ENCODE measurements at regions of chr1 and their contacts with region 1.

Region 1: DNA sequence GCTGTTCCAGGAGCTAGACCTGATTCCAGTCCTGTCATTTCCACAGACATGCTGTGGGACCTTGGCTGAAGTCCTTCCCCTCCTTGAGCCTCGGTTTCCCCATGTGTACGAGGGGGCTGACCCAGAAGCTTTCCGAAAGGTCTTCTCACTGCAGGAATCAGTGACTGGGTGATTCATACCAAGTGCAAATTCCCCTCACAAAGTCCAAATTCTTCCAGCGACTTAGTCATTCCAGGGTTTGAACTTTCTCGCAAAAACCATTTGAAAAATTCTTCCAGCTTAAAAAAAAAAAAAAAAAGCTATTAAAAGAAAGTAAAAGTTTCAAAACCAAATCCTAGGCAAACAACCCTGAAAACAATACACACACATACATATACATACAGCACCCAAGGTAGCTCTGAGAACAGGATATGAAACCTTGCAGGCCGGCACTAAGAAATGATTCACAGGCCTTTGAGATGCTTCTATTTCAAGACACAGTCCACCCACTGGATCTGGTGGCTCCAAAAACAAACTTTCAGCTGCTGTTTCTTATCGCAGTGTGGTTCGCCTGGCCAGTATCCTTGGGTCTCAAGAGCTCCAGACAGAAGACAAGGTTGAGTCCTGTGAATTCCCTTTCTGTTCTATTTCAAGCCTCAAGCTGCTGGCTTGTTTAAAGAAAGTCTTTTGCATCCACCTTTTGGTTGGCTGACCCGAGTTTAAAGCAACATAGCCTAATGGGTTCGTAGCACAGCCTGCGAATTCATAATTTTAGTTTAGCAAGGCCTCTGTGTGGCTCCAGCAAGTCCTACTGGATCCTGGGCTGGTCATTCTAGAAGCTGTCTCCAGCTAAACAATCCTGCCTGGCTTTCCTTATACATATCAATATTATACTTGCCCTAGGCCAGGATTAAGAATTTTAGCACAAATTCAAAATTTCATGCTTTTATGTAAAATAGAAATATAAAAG is 18.0 kb upstream of the ID3 start:
- DNase-seq: peak; percentile 77
- CTCF ChIP-seq: no peak

Region 2: DNA sequence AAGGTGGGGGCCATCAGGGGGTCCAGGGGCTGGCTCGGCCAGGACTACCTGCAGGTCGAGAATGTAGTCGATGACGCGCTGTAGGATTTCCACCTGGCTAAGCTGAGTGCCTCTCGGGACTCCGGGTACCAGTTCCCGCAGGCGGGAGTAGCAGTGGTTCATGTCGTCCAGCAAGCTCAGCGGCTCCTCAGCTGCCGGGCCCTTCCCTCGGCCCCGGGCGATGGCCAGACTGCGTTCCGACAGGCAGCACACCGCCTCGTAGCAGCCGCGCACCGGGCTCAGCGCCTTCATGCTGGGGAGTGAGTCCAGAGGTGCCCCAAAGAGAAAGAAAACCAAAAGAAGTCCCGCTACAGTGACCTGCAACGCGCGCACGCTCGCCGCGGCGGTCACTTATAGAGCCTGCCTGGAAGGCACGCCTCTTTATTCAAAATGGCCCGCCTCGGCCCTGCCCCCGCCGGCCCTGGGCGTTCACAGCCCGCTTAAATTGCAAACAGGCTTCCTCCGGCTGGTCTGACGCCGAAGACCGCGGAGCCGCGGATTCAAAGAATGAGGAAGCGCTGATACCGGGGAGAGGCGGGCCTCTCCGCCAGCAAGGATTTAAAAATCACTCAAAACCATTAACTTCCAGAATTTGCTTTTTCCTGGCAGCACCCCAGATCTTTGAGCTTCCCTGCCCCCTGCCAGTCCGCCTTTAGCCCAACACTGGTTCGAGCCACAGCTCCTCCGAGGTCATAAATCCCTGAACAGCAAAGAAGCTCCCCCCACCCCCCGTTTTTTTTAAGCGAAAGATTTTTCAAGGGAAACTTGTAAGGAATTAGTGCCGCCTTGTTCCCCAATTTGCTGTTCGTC is 18.0 kb before region 1 on chr1 and contains the start of gene ID3:
- CTCF ChIA-PET with region 1: interaction called, 15 read pairs
- POLR2A ChIA-PET with region 1: interaction called, 22 read pairs
- DNase-seq: peak; percentile 89
- CTCF ChIP-seq: no peak

Region 3: DNA sequence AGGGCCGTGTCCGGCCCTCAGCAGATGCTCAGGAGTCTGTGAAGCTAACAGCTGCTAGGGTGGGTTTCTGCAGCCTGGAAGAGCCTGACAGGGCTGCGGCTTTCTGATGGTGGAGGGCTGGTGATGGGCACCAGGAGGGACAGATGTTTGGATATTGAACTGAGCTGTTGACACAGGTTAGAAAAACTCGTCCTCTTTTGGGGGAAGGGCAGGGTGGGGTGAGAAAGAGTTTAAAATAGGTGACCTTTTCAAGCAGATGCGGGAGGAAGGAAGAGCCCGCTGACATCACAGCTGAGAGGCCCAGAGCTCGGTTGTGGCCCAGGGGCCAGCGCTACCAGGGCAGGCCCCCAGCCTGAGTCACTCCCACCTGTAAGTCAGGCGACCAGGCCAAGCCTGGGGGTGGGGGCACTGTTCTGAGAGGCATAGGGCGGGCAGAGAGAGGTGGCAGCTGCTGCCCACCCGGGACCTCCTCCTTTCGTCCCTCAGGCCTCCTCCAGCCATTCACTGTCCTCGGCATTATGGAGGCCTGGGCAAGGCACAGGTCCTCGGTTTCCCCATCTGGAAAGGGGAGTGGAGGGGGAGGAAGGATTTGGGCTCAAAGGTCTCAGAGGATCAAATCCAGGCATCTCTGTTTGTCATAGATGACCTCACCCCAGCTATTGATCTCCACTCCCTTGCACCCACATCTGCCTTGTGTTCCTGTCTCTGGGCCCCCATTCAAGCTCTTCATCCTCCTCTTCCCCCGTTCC is 14.3 kb after region 1 on chr1:
- CTCF ChIA-PET with region 1: interaction called, 26 read pairs
- POLR2A ChIA-PET with region 1: interaction called, 11 read pairs
- DNase-seq: peak; percentile 79
- CTCF ChIP-seq: no peak

Region 4: DNA sequence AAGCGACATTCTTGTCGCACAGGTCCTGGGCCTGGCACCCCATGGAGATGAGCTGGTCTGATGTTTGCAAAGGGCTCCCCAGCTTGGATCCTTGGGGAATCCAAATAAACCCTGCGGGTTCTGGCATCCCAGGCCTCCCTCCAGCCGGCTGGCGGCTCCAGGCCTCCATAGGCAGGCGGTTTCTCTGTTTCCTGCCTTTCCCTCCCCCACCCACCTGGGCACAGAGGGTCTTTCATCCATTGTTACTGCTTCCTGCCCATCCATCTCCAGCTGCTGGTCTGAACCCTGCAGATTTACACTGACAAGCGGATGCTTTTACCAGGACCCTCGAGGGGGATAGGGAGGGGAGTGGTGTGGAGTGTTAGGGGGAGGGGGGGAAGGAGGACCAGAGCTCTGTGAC is 21.1 kb after region 1 on chr1:
- CTCF ChIA-PET with region 1: interaction called, 26 read pairs
- POLR2A ChIA-PET with region 1: interaction called, 5 read pairs
- DNase-seq: no peak
- CTCF ChIP-seq: no peak

Region 5: GRCh38 chr1:23619299-23620188 is 42.2 kb after region 1 on chr1:
- CTCF ChIA-PET with region 1: interaction called, 13 read pairs
- POLR2A ChIA-PET with region 1: interaction called, 8 read pairs
- DNase-seq: peak; percentile 87
- CTCF ChIP-seq: no peak

Region 6: GRCh38 chr1:23984417-23985186 is 407.3 kb after region 1 on chr1:
- CTCF ChIA-PET with region 1: no interaction called
- POLR2A ChIA-PET with region 1: no interaction called
- DNase-seq: no peak
- CTCF ChIP-seq: no peak